Right ventricle myocardium inferior (tissue), 1 donor: ENCODE measurements at regions of chr10 and their contacts with region 1.

Region 1: DNA sequence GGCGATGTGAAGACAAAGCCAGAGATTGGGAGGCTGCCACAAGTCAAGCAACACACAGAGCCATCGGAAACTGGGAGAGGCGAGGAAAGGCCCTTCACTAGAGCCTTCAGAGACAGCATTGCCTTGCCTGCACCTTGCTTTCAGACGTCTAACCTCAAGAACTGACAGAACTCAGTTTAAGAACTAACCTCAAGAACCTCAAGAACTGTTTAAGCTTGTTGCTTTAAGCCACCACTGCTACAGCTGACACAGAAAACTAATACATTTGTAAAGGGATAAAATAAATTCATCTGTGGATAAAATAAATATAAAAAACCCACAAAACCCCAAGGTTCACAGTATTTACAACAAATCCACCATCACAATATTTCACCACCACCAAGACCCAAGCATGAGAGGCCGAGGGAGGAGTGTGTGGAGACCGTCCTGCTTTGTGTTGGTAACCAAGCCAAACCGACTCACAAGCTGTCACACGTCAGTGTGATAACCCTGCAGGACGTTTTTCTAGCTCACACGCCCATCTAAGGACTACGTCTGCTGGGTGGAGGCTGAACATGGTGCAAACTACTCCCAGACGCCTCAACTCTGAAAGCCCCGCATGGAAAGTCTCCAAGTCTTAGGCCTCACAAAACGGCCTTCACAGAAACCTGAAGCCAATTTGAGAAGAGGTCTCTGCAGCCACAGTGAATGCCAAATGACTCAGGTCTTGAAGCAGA is 116.8 kb downstream of the ABLIM1 start:
- DNase-seq: peak; percentile 82
- ATAC-seq: peak; percentile 95

Region 2: DNA sequence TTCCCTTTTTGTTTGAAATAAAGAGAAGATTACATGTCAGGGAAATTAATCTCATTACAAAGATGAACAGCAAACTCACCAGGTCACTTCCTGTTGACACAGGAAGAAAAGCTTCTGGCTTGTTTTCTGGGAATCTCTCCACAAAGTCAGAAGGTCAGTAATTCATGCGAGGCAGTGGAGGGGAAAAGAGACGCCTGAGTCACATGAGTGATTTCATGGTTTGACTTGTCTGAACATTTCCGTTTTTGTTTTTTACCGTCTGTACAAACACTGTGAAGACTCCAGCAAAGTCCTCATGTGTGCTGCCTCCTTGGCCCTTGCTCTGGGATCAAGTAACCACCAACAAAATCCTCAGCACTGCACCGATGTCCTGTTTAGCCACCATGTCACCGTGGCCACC is 990.9 kb before region 1 on chr10:
- intact Hi-C with region 1: no loop called
- DNase-seq: no peak
- ATAC-seq: no peak

Region 3: DNA sequence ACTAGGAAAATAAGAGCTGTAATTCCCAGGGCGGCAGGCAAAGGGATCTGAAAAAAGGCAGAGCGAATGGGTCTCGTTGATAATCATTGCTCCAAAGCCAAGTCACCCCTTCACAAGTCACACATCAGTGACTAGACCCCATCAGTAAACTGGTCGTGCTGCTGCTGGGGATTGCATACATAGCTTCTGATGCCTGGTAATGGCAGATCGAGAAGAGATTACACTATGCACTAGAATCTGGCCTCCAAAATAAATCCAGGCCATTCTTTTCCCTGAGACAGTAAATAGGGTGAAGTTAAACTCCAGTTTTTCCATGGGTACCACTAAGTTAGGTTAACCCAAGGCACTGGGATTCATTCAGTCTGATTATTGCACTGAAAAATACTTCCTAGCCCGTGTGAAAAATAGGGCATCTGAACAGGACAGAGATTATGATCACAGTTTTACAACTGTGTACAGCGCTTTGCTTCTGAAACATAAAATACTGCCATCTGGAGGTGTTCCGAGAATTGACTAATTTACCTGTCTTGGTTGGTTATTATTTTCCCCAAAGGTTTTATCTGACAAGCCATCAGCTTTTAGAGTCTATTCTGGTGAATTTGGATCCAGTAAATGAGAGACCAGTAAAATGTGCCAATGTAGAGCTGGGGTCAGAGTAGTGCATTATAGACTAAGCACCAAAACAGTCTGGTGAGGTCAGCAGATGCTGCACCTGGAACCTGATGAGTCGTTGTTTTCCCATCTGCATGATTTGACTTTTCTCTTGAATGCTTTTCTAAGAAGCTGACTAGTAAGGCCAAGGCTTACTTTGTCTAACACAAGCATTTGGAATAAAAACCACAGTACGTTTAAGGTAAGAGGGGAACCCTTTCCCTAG is 54.1 kb before region 1 on chr10:
- intact Hi-C with region 1: loop called (anchors 5 kb)
- DNase-seq: no peak
- ATAC-seq: no peak

Region 4: GRCh38 chr10:114526504-114527238 is 14.6 kb before region 1 on chr10:
- intact Hi-C with region 1: loop called (anchors 2 kb)
- DNase-seq: peak; percentile 72
- ATAC-seq: peak; percentile 87